ENCODE measurements at regions of chr20 and their contacts with region 1.

Region 1: DNA sequence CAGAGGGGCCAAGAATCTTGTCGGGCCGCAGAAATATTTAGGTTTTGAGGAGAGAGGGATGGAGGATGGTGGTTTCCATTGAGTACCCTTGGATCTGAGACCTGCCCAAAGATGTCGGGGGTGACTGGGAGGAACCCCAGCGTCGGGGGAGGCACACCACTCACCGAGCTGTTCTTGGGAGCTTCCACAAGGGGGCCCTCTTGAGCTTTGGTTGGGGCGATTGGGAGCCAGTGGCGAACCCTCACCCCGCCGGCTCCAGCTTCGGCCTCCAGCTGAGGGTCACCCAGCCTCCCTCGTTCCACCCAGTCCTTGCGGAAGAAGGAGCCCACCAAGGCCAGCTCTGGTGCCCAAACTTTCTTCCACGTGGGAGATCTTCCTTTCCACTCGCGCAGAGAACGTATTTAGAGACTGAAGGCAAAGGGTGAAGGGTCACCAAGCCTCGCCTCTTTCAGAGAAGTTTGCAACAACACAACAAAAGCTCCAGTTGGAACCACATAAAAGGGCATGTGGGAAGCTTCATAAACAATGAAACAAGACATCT is 33.6 kb downstream of the APCDD1L start:
- DNase-seq: peak; percentile 27
- ATAC-seq: peak; percentile 98
- H3K4me3 ChIP-seq: no peak overlapping the region
- H3K27ac ChIP-seq: no peak overlapping the region
- H3K4me1 ChIP-seq: peaks cover 6 to 12% of the 10 kb centered on the region in 2 experiments
- H3K27me3 ChIP-seq: no peaks in the 10 kb centered on the region
- CTCF ChIP-seq: peak; percentile 77 to 80 (median 79)
- POLR2A ChIP-seq: no peak
- RAD21 ChIP-seq: peak; percentile 90

Region 2: GRCh38 chr20:58692594-58693226 is 211.2 kb after region 1 on chr20 and contains the start of gene NPEPL1:
- CTCF ChIA-PET with region 1: interaction called, 5 read pairs
- POLR2A ChIA-PET with region 1: no interaction called
- RAD21 ChIA-PET with region 1: no interaction called
- intact Hi-C with region 1: loop called (anchors 5 kb)
- DNase-seq: peak; percentile 28
- ATAC-seq: peak; percentile 96
- H3K4me3 ChIP-seq: peak within 1 kb of the TSS; percentile 38 to 52
- H3K27ac ChIP-seq: peak within 1 kb of the TSS; percentile 71
- H3K4me1 ChIP-seq: peaks cover 7 to 16% of the 10 kb centered on the region in 2 experiments
- H3K27me3 ChIP-seq: no peaks in the 10 kb centered on the region
- CTCF ChIP-seq: no peak
- POLR2A ChIP-seq: no peak
- RAD21 ChIP-seq: no peak
- total RNA-seq, gene NPEPL1: 16.6 TPM

Region 3: DNA sequence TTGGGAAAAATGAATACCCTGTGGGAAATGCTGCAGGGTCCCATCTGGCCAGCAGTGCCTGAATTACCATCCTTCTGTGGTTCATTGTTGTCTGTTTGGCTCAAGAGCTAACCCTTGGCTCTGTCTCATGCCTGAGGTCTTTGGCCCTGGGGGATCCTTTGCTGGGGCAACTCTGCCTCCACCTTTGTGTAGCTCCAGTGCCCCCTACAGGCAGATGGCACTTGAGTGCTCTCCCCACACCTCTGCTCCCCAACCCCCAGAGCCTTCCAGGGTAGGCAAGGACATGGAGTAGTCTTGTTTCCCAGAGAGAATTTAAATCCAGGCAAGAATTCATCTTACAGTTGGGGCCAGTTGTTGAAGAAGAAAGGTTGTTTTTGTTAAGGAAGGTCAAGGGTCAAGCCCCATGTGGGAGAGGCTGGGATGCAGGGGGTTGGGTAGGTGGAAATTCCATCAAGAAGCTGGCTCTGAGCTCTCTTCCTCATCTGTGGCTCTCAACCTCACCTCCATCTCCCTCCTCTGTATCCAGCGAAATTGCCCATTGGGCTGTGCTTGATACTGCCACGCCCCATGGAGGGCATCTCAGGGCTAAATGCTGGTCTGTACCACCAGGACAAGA is 726.3 kb after region 1 on chr20:
- CTCF ChIA-PET with region 1: interaction called, 12 read pairs
- POLR2A ChIA-PET with region 1: no interaction called
- RAD21 ChIA-PET with region 1: no interaction called
- intact Hi-C with region 1: no loop called
- DNase-seq: peak; percentile 16
- ATAC-seq: peak; percentile 90
- H3K4me3 ChIP-seq: no peak overlapping the region
- H3K27ac ChIP-seq: no peak overlapping the region
- H3K4me1 ChIP-seq: no peaks in the 10 kb centered on the region
- H3K27me3 ChIP-seq: peaks cover 22% of the 10 kb centered on the region
- CTCF ChIP-seq: peak; percentile 53 to 72 (median 67); a peak in 5 of 6 replicates
- POLR2A ChIP-seq: no peak
- RAD21 ChIP-seq: peak; percentile 71

Region 4: DNA sequence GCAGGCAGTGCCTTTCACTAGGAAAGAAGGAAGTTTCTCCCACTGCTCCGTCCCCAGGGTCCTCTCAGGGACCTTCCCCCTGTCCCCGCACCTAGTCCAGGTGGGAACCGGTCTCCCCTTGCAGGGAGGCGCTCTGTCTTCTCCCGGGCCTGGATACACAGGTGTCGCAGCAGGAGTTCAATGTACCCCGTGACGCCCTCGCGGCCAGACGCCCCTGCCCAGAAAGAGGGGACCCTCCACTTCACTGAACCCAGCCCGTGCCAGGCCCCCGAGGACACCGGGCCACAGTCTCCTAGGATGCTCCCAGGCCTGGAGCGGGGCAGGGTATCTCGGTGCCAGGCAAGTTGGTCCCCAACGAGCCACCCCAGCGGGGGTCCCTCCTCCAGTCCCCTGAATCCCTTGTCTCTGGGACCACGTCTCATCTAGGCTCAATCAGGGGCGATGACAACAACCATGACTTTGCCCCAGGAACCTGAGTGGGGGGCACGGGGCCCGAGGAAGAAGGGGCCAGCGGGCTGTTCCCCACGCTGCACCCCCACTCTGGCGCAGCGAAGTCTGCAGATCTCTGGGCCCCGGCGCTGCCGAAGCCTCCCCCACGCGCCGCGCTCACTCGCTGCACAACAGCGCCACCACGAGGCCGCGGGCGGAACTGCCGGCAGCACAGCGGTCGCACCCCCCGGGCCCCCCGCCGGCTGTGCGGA is 921.9 kb after region 1 on chr20:
- CTCF ChIA-PET with region 1: no interaction called
- POLR2A ChIA-PET with region 1: no interaction called
- RAD21 ChIA-PET with region 1: no interaction called
- intact Hi-C with region 1: loop called (anchors 5 kb)
- DNase-seq: no peak
- ATAC-seq: peak; percentile 90
- H3K4me3 ChIP-seq: no peak overlapping the region
- H3K27ac ChIP-seq: no peak overlapping the region
- H3K4me1 ChIP-seq: peaks cover 0 to 2% of the 10 kb centered on the region in 2 experiments; a peak in 1 of 4 replicates
- H3K27me3 ChIP-seq: peaks cover 81% of the 10 kb centered on the region
- CTCF ChIP-seq: peak; percentile 57 to 96 (median 95)
- POLR2A ChIP-seq: no peak
- RAD21 ChIP-seq: peak; percentile 83

Measured in HCT116 (cell line).